Stomach (tissue), 19 donors: ENCODE measurements at regions of chr17 and their contacts with region 1.

Region 1: GRCh38 chr17:57747221-57748017 is 2.3 kb upstream of the CCDC182 start:
- DNase-seq: peak; percentile 38 to 82
- H3K4me3 ChIP-seq: no peak overlapping the region
- H3K27ac ChIP-seq: no peak overlapping the region
- H3K4me1 ChIP-seq: peaks cover 0 to 5% (median 2%) of the 10 kb centered on the region in 4 donors
- H3K27me3 ChIP-seq: peaks cover 0 to 11% (median 0%) of the 10 kb centered on the region in 3 donors
- CTCF ChIP-seq: peak in 5 of 7 experiments; percentile 51 to 65 (median 60)
- EP300 ChIP-seq: no peak
- POLR2A ChIP-seq: no peak

Region 2: GRCh38 chr17:57130761-57131461 is 616.5 kb before region 1 on chr17:
- intact Hi-C with region 1: loop called (anchors 5 kb)
- DNase-seq: peak; percentile 91 to 93
- H3K4me3 ChIP-seq: peak overlapping the region in 1 of 4 donors; percentile 10
- H3K27ac ChIP-seq: no peak overlapping the region
- H3K4me1 ChIP-seq: peaks cover 0 to 9% (median 4%) of the 10 kb centered on the region in 4 donors
- H3K27me3 ChIP-seq: no peaks in the 10 kb centered on the region
- CTCF ChIP-seq: peak in 5 of 7 experiments; percentile 40 to 92 (median 89)
- EP300 ChIP-seq: no peak
- POLR2A ChIP-seq: no peak

Region 3: GRCh38 chr17:57234751-57235117 is 512.7 kb before region 1 on chr17:
- intact Hi-C with region 1: loop called (anchors 10 kb)
- DNase-seq: no peak
- H3K4me3 ChIP-seq: no peak overlapping the region
- H3K27ac ChIP-seq: no peak overlapping the region
- H3K4me1 ChIP-seq: peaks cover 0 to 13% (median 10%) of the 10 kb centered on the region in 4 donors
- H3K27me3 ChIP-seq: no peaks in the 10 kb centered on the region
- CTCF ChIP-seq: no peak
- EP300 ChIP-seq: no peak
- POLR2A ChIP-seq: no peak

Region 4: GRCh38 chr17:57677301-57678257 is 69.8 kb before region 1 on chr17:
- intact Hi-C with region 1: no loop called
- DNase-seq: no peak
- H3K4me3 ChIP-seq: no peak overlapping the region
- H3K27ac ChIP-seq: no peak overlapping the region
- H3K4me1 ChIP-seq: no peaks in the 10 kb centered on the region
- H3K27me3 ChIP-seq: no peaks in the 10 kb centered on the region
- CTCF ChIP-seq: no peak
- EP300 ChIP-seq: no peak
- POLR2A ChIP-seq: no peak